ENCODE measurements at regions of chr11 and their contacts with region 1.

Region 1: DNA sequence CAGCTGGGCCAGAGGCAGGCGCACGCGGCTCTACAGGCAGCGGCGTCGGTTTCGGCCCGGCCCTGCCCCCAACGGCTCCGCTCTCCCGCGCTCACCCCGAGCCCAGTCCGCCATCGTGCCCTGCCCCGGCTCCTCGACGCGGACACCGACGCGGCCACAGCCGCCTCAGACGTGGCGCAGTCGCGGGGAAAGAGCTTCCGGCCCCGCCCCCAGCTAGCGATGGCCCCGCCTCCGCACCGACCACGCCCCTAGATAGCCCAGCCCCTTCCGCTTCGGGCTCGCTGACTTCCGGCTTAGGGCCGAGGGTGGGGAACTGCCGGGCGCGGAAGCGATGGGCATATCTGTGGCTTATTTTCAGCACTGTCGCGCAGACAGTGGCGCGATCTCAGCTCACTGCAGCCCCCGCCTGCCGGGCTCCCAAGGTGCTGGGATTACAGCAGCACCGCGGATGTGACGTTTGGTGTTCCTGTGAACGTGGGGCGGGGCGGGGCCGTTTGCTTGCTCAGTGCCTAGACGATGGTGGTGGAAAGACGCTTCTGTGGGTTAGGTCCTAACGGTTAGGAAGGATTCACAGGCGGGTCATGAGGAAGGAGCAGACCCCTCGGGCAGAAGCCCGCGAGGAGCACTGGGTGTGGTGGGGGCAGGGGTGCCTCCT is at the starts of genes BET1L and RIC8A:
- DNase-seq: peak; percentile 98
- ATAC-seq: peak; percentile 78
- H3K4me3 Mint-ChIP-seq: peak within 1 kb of the TSS; percentile 94
- H3K27ac Mint-ChIP-seq: peak within 1 kb of the TSS; percentile 99
- H3K4me1 Mint-ChIP-seq: peaks cover 63% of the 10 kb centered on the region
- H3K27me3 Mint-ChIP-seq: no peaks in the 10 kb centered on the region
- total RNA-seq, gene BET1L: 33.8 to 34.2 TPM
- total RNA-seq, gene RIC8A: 121 to 126 TPM

Region 2: GRCh38 chr11:236774-237767 is 29.7 kb after region 1 on chr11 and contains the start of gene PSMD13:
- CTCF ChIA-PET with region 1: interaction called, 7 read pairs
- POLR2A ChIA-PET with region 1: interaction called, 16 read pairs
- DNase-seq: peak; percentile 92
- ATAC-seq: peak; percentile 87
- H3K4me3 Mint-ChIP-seq: peak within 1 kb of the TSS; percentile 99
- H3K27ac Mint-ChIP-seq: peak within 1 kb of the TSS; percentile 99
- H3K4me1 Mint-ChIP-seq: peaks cover 48% of the 10 kb centered on the region
- H3K27me3 Mint-ChIP-seq: no peaks in the 10 kb centered on the region
- total RNA-seq, gene PSMD13: 164 to 173 TPM

Region 3: GRCh38 chr11:269146-269890 is 62.0 kb after region 1 on chr11:
- CTCF ChIA-PET with region 1: no interaction called
- POLR2A ChIA-PET with region 1: interaction called, 15 read pairs
- DNase-seq: peak; percentile 69
- ATAC-seq: peak; percentile 47
- H3K4me3 Mint-ChIP-seq: peak overlapping the region; percentile 75
- H3K27ac Mint-ChIP-seq: peak overlapping the region; percentile 92
- H3K4me1 Mint-ChIP-seq: peaks cover 35% of the 10 kb centered on the region
- H3K27me3 Mint-ChIP-seq: peaks cover 2% of the 10 kb centered on the region

Region 4: GRCh38 chr11:279966-280582 is 72.7 kb after region 1 on chr11:
- CTCF ChIA-PET with region 1: interaction called, 6 read pairs
- POLR2A ChIA-PET with region 1: interaction called, 10 read pairs
- DNase-seq: peak; percentile 68
- ATAC-seq: peak; percentile 28
- H3K4me3 Mint-ChIP-seq: peak overlapping the region; percentile 81
- H3K27ac Mint-ChIP-seq: peak overlapping the region; percentile 90
- H3K4me1 Mint-ChIP-seq: peaks cover 55% of the 10 kb centered on the region
- H3K27me3 Mint-ChIP-seq: peaks cover 9% of the 10 kb centered on the region

Region 5: GRCh38 chr11:422249-422656 is 214.9 kb after region 1 on chr11:
- CTCF ChIA-PET with region 1: no interaction called
- POLR2A ChIA-PET with region 1: no interaction called
- DNase-seq: no peak
- ATAC-seq: no peak
- H3K4me3 Mint-ChIP-seq: no peak overlapping the region
- H3K27ac Mint-ChIP-seq: peak overlapping the region; percentile 21
- H3K4me1 Mint-ChIP-seq: peaks cover 7% of the 10 kb centered on the region
- H3K27me3 Mint-ChIP-seq: no peaks in the 10 kb centered on the region

Measured in activated CD8-positive, alpha-beta T cell treated with anti-CD3 and anti-CD28 coated beads, Interleukin-2, amount 10 ng/mL, durations not matched to agents 7 days and 5 days (primary cell).